ENCODE measurements at regions of chr2 and their contacts with region 1.

Region 1: GRCh38 chr2:171598713-171599319 is 76.5 kb downstream of the CYBRD1 start:
- DNase-seq: peak; percentile 72
- H3K4me3 Mint-ChIP-seq: no peak overlapping the region
- H3K27ac Mint-ChIP-seq: no peak overlapping the region
- H3K4me1 Mint-ChIP-seq: no peaks in the 10 kb centered on the region
- H3K27me3 Mint-ChIP-seq: no peaks in the 10 kb centered on the region

Region 2: GRCh38 chr2:171574149-171574795 is 24.5 kb before region 1 on chr2:
- CTCF ChIA-PET with region 1: interaction called, 4 read pairs
- intact Hi-C with region 1: loop called (anchors 1 kb)
- DNase-seq: peak; percentile 86
- H3K4me3 Mint-ChIP-seq: no peak overlapping the region
- H3K27ac Mint-ChIP-seq: peak overlapping the region; percentile 53
- H3K4me1 Mint-ChIP-seq: peaks cover 5% of the 10 kb centered on the region
- H3K27me3 Mint-ChIP-seq: no peaks in the 10 kb centered on the region

Region 3: DNA sequence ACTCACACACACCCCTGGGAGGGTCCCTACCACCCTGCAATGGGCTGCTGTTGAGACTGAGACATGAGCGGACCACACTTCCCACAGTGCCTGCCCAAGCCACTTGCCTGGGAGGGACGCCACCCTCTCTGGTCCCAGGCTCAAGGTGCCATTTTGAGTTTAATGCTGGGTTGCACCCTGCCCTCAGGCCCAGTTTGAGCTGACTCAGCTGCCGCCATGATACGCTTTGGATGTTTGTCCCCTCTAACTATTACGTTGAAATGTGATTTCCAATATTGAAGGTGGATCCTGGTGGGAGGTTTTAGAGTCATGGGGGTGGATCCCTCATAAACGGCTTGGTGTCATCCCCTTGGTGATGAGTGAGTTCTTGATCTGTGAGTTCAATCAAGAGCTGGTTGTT is 12.0 kb after region 1 on chr2:
- CTCF ChIA-PET with region 1: interaction called, 13 read pairs
- intact Hi-C with region 1: no loop called
- DNase-seq: no peak
- H3K4me3 Mint-ChIP-seq: no peak overlapping the region
- H3K27ac Mint-ChIP-seq: no peak overlapping the region
- H3K4me1 Mint-ChIP-seq: no peaks in the 10 kb centered on the region
- H3K27me3 Mint-ChIP-seq: no peaks in the 10 kb centered on the region

Region 4: DNA sequence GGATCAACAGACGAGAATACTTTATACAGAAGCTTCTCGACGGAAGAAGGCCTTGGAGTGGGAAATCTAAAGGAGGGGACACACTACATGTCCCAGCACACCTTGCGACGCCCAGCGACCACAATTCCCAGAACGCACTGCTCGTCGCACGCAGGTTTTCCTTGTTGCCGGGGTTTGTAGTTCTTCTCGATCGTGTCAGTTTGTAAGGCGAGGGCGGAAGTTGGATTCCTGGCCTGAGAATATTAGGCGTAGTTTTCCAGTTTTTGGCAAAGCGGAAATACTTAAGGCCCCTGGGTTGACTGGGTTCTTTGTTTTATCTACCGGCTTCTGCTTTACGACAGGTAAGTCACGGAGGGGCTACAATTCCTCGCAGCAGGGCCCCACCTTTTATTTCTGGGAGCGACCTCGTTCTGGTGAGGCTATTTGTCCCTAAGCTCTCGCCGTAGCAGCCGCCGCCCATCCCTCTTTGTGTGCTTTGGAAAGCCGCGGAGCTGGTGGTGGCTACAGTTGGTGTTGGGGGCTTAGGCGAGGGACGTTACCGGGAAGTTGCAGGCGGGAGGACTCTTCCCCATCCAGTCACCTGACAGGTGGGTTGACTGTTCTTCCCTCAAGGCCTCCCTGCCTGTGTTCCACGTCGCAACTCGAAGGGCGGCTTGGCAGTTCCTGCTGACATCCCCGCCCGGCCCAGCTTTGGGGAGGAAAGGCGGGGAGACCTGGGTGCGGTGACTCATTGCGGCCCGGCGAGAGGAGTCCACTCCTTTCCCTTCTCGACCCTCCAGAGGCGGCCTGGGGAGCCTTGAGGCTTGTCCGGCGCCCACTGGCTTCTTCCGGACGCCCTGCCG is 88.7 kb after region 1 on chr2 and contains the start of gene DYNC1I2:
- CTCF ChIA-PET with region 1: interaction called, 4 read pairs
- intact Hi-C with region 1: loop called (anchors 2 kb)
- DNase-seq: peak; percentile 88
- H3K4me3 Mint-ChIP-seq: peak within 1 kb of the TSS; percentile 84
- H3K27ac Mint-ChIP-seq: peak within 1 kb of the TSS; percentile 85
- H3K4me1 Mint-ChIP-seq: peaks cover 15% of the 10 kb centered on the region
- H3K27me3 Mint-ChIP-seq: no peaks in the 10 kb centered on the region
- total RNA-seq, gene DYNC1I2: 37.8 to 38.9 TPM

Region 5: GRCh38 chr2:172131713-172132555 is 533.1 kb after region 1 on chr2:
- CTCF ChIA-PET with region 1: interaction called, 12 read pairs
- intact Hi-C with region 1: loop called (anchors 1 kb)
- DNase-seq: no peak
- H3K4me3 Mint-ChIP-seq: no peak overlapping the region
- H3K27ac Mint-ChIP-seq: no peak overlapping the region
- H3K4me1 Mint-ChIP-seq: no peaks in the 10 kb centered on the region
- H3K27me3 Mint-ChIP-seq: no peaks in the 10 kb centered on the region